ENCODE measurements at regions of chr2 and their contacts with region 1.

Region 1: GRCh38 chr2:231612179-231613053 is 19.8 kb downstream of the TEX44 start:
- DNase-seq: peak; percentile 83 to 95 (median 90)
- ATAC-seq: peak; percentile 73 to 81 (median 78)
- H3K4me3 ChIP-seq: no peak overlapping the region
- H3K27ac ChIP-seq: peak overlapping the region; percentile 71 to 94 (median 86)
- H3K4me1 ChIP-seq: peaks cover 19 to 20% (median 20%) of the 10 kb centered on the region in 3 donors
- H3K27me3 ChIP-seq: no peaks in the 10 kb centered on the region
- CTCF ChIP-seq: peak; percentile 87 to 92 (median 90)

Region 2: DNA sequence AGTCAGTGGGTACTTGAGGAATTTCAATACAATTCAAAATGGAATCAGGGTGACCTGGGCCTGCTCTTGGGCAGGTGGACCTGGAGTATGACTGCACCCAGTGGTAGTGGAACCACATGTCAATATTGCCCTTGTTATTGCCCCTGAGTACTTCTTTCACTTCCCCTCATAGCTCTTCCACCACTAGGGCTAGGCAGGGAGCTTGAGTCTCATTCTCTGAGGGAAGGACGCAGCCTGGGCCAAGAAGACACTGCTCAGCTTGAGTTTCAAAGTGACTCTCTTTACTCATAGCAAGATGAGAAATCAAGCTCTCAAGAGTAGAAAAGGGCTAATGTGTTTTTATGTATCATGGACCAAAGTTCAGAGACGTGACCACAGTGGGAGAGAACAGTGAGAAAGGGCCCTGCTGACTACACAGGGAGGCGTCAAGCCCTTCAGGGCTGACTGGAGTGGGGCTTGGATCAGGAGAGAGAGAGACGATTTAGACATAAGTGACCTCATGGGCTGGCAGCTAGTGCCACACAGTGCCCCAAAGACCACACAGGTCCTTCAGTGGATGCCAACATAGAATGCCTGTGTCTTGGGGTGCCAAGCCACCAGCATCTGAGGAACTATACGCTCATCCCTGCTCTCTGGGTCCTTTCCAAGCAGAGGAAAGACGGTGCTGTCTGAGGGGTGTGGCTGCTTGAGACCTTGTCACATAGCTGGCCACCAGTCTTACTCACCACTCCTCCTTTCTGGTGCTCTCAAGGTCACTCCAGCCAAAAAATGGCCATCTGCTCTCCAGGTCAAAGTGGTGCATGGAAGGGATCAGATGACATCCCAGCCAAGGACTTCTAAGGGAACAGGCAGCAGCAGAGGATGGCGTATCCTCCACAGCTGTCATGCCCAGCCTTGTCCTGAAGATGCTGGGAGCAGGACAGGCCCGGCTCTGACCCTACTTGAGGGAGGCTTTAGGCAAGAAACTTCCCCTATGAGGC is 108.9 kb after region 1 on chr2:
- intact Hi-C with region 1: loop called in 1 of 3 experiments (anchors 10 kb)
- DNase-seq: no peak
- ATAC-seq: peak in 1 of 4 donors; percentile 36
- H3K4me3 ChIP-seq: no peak overlapping the region
- H3K27ac ChIP-seq: no peak overlapping the region
- H3K4me1 ChIP-seq: no peaks in the 10 kb centered on the region
- H3K27me3 ChIP-seq: no peaks in the 10 kb centered on the region
- CTCF ChIP-seq: no peak